GM12878 (cell line): ENCODE measurements at regions of chr15 and their contacts with region 1.

Region 1: DNA sequence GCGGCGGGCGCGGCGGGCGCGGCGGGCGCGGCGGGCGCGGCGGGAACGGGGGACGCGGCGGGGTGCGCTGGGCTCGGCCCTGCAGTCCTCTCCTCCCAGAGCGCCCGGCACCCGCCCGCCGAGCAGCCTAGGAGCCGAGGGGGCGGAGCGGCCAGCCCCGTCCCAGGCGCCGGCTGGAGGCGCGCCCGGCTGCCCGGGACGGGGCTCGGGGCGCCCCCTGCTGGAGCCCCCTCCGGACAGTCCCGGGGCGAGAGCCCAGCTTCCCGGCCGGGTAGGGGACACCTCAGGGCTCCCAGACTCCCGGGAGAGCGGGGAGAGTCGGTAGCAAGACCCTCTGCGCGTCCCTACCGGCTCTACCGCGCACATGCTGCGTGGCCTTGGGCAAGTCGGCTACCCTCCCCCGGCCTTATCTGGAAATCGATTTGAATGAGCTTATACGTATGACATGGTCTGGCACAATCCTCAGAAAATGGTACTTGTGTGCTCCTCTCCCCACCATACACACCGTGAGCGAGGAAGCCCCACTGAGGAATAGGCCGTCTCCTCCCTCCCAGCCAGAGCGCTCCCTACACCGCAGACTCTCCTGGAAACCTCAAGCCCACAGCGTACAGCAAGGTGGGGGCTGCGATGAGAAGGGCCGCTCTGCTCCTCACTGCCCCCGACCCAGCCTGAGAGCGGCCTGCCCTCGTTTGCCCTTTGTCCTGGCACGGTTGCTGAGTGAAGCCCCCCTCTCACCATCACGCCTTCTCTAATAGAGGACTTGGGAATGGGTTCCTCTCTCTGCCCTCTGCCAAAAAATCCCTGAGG is at the start of gene DAPK2:
- DNase-seq: no peak
- ATAC-seq: peak; percentile 79
- H3K4me3 ChIP-seq: peak within 1 kb of the TSS; percentile 69
- H3K27ac ChIP-seq: peak within 1 kb of the TSS; percentile 55
- H3K4me1 ChIP-seq: peaks cover 36% of the 10 kb centered on the region
- H3K27me3 ChIP-seq: no peaks in the 10 kb centered on the region
- CTCF ChIP-seq: peak; percentile 71 to 81 (median 74)
- EP300 ChIP-seq: no peak
- POLR2A ChIP-seq: no peak; the same call in 1 of the 2 replicates
- RAD21 ChIP-seq: peak; percentile 67
- polyA plus RNA-seq, gene DAPK2: 0.69 to 0.75 TPM

Region 2: GRCh38 chr15:63610200-63610841 is 436.2 kb before region 1 on chr15:
- CTCF ChIA-PET with region 1: interaction called, 21 read pairs
- POLR2A ChIA-PET with region 1: no interaction called
- RAD21 ChIA-PET with region 1: interaction called, 5 read pairs
- SMC1A ChIA-PET with region 1: interaction called, 6 read pairs
- in situ Hi-C with region 1: no loop called
- intact Hi-C with region 1: no loop called
- DNase-seq: peak; percentile 61
- ATAC-seq: peak; percentile 97
- H3K4me3 ChIP-seq: no peak overlapping the region
- H3K27ac ChIP-seq: peak overlapping the region; percentile 78
- H3K4me1 ChIP-seq: peaks cover 16% of the 10 kb centered on the region
- H3K27me3 ChIP-seq: no peaks in the 10 kb centered on the region
- CTCF ChIP-seq: peak; percentile 80 to 93 (median 89)
- EP300 ChIP-seq: no peak
- POLR2A ChIP-seq: no peak
- RAD21 ChIP-seq: peak; percentile 92

Region 3: DNA sequence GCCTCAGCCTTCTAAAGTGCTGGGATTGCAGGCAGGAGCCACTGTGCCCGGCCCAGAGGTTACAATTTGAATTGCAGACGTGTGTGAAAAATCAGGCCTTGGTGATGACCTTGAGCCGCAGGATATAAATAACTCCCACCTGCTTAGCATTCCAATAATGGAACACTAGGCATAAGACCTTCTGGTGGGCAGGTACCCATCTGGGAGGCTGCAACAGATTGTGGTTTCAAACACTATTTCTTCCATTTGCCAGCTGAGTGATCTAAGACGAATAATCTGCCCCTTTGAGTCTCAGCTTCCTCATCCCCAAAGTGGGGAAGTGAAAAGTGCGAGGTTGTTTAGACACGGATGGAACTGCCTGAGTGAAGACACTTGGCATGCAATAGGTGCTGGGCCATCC is 165.1 kb before region 1 on chr15:
- CTCF ChIA-PET with region 1: interaction called, 4 read pairs
- POLR2A ChIA-PET with region 1: interaction called, 3 read pairs
- RAD21 ChIA-PET with region 1: interaction called, 10 read pairs
- SMC1A ChIA-PET with region 1: no interaction called
- in situ Hi-C with region 1: no loop called
- intact Hi-C with region 1: no loop called
- DNase-seq: peak; percentile 81
- ATAC-seq: peak; percentile 69
- H3K4me3 ChIP-seq: no peak overlapping the region
- H3K27ac ChIP-seq: peak overlapping the region; percentile 66
- H3K4me1 ChIP-seq: peaks cover 53% of the 10 kb centered on the region
- H3K27me3 ChIP-seq: no peaks in the 10 kb centered on the region
- CTCF ChIP-seq: 0 out of 6 replicates have a peak, but pooled peaks of 1 of the 3 experiments have one; percentile 7
- EP300 ChIP-seq: peak; percentile 16 to 51; a peak in 1 of 4 replicates
- POLR2A ChIP-seq: no peak
- RAD21 ChIP-seq: no peak

Region 4: GRCh38 chr15:63896336-63897115 is 150.0 kb before region 1 on chr15:
- CTCF ChIA-PET with region 1: interaction called, 65 read pairs
- POLR2A ChIA-PET with region 1: interaction called, 4 read pairs
- RAD21 ChIA-PET with region 1: interaction called, 15 read pairs
- SMC1A ChIA-PET with region 1: interaction called, 33 read pairs
- in situ Hi-C with region 1: no loop called
- intact Hi-C with region 1: loop called (anchors 2 kb)
- DNase-seq: peak; percentile 90
- ATAC-seq: peak; percentile 84
- H3K4me3 ChIP-seq: no peak overlapping the region
- H3K27ac ChIP-seq: peak overlapping the region; percentile 84
- H3K4me1 ChIP-seq: peaks cover 59% of the 10 kb centered on the region
- H3K27me3 ChIP-seq: no peaks in the 10 kb centered on the region
- CTCF ChIP-seq: no peak
- EP300 ChIP-seq: peak; percentile 93 to 95
- POLR2A ChIP-seq: no peak
- RAD21 ChIP-seq: no peak

Region 5: GRCh38 chr15:63945007-63945788 is 101.4 kb before region 1 on chr15:
- CTCF ChIA-PET with region 1: interaction called, 58 read pairs
- POLR2A ChIA-PET with region 1: interaction called, 3 read pairs
- RAD21 ChIA-PET with region 1: interaction called, 7 read pairs
- SMC1A ChIA-PET with region 1: interaction called, 20 read pairs
- in situ Hi-C with region 1: no loop called
- intact Hi-C with region 1: no loop called
- DNase-seq: no peak
- ATAC-seq: peak; percentile 89
- H3K4me3 ChIP-seq: no peak overlapping the region
- H3K27ac ChIP-seq: no peak overlapping the region
- H3K4me1 ChIP-seq: peaks cover 13% of the 10 kb centered on the region
- H3K27me3 ChIP-seq: no peaks in the 10 kb centered on the region
- CTCF ChIP-seq: peak; percentile 83 to 99 (median 98)
- EP300 ChIP-seq: no peak
- POLR2A ChIP-seq: no peak
- RAD21 ChIP-seq: peak; percentile 78

Region 6: DNA sequence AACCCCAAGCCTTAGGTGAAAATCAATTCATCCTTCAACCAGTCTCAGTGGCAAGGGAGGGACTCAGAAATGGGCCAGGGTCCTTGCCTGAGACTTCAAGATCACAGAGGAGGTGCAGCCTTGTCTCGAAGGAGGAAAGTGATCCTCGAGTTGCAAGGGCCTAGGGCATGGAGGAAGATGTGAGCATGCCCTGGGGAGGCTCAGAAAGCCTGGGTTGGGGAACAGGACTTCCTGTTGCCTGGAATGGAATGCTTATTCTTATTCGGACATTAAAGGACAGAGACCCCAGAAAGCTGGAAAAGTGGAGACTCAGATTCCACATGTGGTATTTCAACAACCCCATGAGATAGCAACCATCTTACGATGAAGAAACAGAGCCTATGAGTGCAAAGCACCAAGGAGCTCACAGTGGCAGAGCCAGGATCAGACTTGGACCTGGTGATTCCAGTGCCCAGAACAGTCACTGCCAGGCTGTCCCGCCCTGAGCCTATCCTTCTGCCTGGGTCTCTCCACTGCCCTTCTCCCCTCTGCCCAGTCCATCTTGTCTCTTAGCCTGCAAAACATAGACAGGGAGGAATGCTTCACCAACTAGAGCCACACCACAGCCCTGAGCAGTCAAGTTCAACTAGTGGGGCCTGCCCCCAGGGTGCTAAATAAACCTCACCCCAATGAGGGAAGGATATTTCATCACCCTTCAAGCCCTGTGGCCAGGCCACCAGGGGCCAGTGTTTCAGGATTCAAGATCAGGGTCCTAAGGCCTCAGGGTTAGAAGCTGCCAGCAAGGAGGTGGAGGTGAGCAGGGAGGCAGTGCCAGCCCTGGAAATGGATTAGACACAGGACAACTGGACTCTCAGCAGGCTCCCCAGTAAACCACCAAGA is 22.1 kb before region 1 on chr15:
- CTCF ChIA-PET with region 1: interaction called, 18 read pairs
- POLR2A ChIA-PET with region 1: no interaction called
- RAD21 ChIA-PET with region 1: interaction called, 6 read pairs
- SMC1A ChIA-PET with region 1: interaction called, 10 read pairs
- in situ Hi-C with region 1: no loop called
- intact Hi-C with region 1: no loop called
- DNase-seq: no peak
- ATAC-seq: peak; percentile 62
- H3K4me3 ChIP-seq: no peak overlapping the region
- H3K27ac ChIP-seq: no peak overlapping the region
- H3K4me1 ChIP-seq: 0 out of 2 replicates have a peak, but pooled peaks cover 4% of the 10 kb centered on the region
- H3K27me3 ChIP-seq: no peaks in the 10 kb centered on the region
- CTCF ChIP-seq: 0 out of 6 replicates have a peak, but pooled peaks of 1 of the 3 experiments have one; percentile 4
- EP300 ChIP-seq: no peak
- POLR2A ChIP-seq: no peak
- RAD21 ChIP-seq: no peak

Region 7: GRCh38 chr15:64067564-64068030 is 21.0 kb after region 1 on chr15:
- CTCF ChIA-PET with region 1: interaction called, 62 read pairs
- POLR2A ChIA-PET with region 1: no interaction called
- RAD21 ChIA-PET with region 1: interaction called, 25 read pairs
- SMC1A ChIA-PET with region 1: interaction called, 79 read pairs
- in situ Hi-C with region 1: no loop called
- intact Hi-C with region 1: no loop called
- DNase-seq: peak; percentile 40
- ATAC-seq: peak; percentile 94
- H3K4me3 ChIP-seq: no peak overlapping the region
- H3K27ac ChIP-seq: no peak overlapping the region
- H3K4me1 ChIP-seq: peaks cover 13% of the 10 kb centered on the region
- H3K27me3 ChIP-seq: no peaks in the 10 kb centered on the region
- CTCF ChIP-seq: peak; percentile 72 to 83 (median 77)
- EP300 ChIP-seq: no peak
- POLR2A ChIP-seq: no peak
- RAD21 ChIP-seq: peak; percentile 89

Region 8: GRCh38 chr15:64355944-64356709 is 309.6 kb after region 1 on chr15 and contains the start of gene CSNK1G1:
- CTCF ChIA-PET with region 1: no interaction called
- POLR2A ChIA-PET with region 1: no interaction called
- RAD21 ChIA-PET with region 1: no interaction called
- SMC1A ChIA-PET with region 1: no interaction called
- in situ Hi-C with region 1: no loop called
- intact Hi-C with region 1: no loop called
- DNase-seq: peak; percentile 90
- ATAC-seq: peak; percentile 99
- H3K4me3 ChIP-seq: peak within 1 kb of the TSS; percentile 77
- H3K27ac ChIP-seq: peak within 1 kb of the TSS; percentile 64
- H3K4me1 ChIP-seq: peaks cover 3% of the 10 kb centered on the region; the same call in 1 of the 2 replicates
- H3K27me3 ChIP-seq: no peaks in the 10 kb centered on the region
- CTCF ChIP-seq: peak in 2 of 3 experiments; percentile 8 to 46; a peak in 2 of 6 replicates
- EP300 ChIP-seq: no peak; a peak in 1 of 4 replicates
- POLR2A ChIP-seq: peak; percentile 72
- RAD21 ChIP-seq: peak; percentile 45
- polyA plus RNA-seq, gene CSNK1G1: 6.1 to 6.2 TPM